ENCODE measurements at regions of chr22 and their contacts with region 1.

Region 1: DNA sequence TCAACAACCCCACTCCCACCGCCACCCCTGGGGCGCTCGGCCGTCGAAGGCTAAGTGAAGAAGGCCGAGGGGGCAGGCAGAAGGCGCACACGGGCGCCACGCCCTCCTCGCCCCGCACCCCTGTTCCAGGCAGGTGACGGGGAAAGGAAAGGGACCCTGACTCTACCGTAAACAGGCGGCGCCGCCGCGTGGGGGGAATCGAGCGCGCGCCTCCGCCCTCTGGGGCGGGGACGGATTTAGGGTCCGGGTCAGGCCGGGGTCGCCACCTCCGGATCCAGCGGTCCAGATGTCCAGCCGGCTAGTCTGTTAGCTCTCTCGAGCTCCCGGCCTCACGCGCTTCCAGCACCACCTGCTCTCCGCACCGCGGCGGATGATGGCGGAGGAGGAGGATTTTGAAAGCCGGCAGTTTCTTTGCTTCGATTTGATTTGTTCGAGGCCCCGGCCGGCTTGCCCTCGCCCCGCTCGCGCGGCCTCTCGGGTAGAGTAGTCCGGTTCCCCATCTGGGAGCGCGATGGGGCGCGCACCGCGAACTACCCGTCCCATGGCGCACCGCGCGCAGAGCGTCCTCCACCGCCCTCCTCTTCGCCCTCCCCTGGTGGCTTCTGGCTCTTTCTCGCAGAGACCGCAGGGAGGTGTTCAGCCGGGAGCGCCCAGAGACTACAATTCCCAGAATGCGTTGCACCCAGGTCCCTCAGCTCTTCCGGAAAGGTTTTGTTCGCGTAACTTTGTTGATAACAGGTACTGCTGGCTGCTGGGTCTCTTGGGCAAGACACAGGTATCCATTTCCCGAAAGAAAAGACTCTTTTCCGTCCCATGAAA is at the start of gene RANGAP1:
- DNase-seq: peak; percentile 95 to 99 (median 99)
- ATAC-seq: peak; percentile 96
- H3K4me3 ChIP-seq: peak within 1 kb of the TSS; percentile 93
- H3K4me3 Mint-ChIP-seq: peak within 1 kb of the TSS; percentile 90 to 99 (median 96)
- H3K27ac ChIP-seq: peak within 1 kb of the TSS; percentile 99
- H3K27ac Mint-ChIP-seq: peak within 1 kb of the TSS; percentile 95 to 99 (median 98)
- H3K4me1 ChIP-seq: peaks cover 10 to 15% of the 10 kb centered on the region in 2 donors
- H3K4me1 Mint-ChIP-seq: peaks cover 21 to 46% (median 42%) of the 10 kb centered on the region in 7 donors
- H3K27me3 ChIP-seq: no peaks in the 10 kb centered on the region
- H3K27me3 Mint-ChIP-seq: no peaks in the 10 kb centered on the region
- total RNA-seq, gene RANGAP1: 60.7 to 122 (median 72.4) TPM

Region 2: DNA sequence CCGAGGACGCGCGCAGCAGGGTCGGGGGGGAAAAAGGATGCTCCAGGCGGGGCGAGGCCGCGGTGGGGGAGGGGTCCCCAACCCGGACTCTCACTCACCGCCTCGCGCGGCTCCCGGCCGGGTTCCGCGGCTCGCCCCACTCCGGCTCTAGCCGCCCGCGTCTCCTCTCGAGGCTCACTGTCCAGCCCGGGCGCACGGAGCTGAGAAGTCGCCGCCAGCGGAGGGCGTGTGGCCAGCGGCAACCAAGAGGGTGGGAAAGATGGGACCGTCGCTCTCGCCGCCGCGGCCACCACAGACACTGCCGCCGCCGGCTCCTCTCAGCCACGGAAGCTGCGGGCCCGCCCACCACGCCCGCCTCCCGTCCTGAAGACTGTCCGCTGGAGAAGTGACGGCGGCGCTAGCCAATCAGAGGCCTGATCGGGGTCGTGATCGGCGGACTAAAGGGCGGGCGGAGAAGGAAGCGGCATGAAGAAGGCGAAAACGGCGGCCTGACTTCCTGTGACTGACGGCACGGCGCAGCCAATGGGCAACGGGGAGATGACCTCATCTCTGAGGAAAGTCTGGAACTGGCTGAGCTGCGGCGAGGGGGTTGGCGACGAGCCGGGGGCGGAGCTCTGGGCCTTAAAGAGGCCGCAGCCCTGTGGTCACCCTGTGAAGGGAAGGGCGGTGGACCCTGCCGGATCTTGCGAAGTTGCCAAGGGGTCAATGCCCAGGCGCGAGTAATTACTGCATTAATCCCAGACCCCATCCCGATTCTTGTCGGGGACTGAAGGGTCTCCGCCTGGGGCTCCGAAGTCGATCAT is 649.4 kb before region 1 on chr22 and contains the start of gene MRTFA:
- CTCF ChIA-PET with region 1: no interaction called
- POLR2A ChIA-PET with region 1: interaction called, 3 read pairs
- intact Hi-C with region 1: loop called in 1 of 2 experiments (anchors 2 kb)
- DNase-seq: peak; percentile 90 to 99 (median 98)
- ATAC-seq: peak; percentile 96
- H3K4me3 ChIP-seq: peak within 1 kb of the TSS; percentile 84
- H3K4me3 Mint-ChIP-seq: peak within 1 kb of the TSS; percentile 94 to 100 (median 97)
- H3K27ac ChIP-seq: peak within 1 kb of the TSS; percentile 85
- H3K27ac Mint-ChIP-seq: peak within 1 kb of the TSS; percentile 96 to 99 (median 97)
- H3K4me1 ChIP-seq: peaks cover 14 to 27% of the 10 kb centered on the region in 2 donors
- H3K4me1 Mint-ChIP-seq: peaks cover 27 to 56% (median 44%) of the 10 kb centered on the region in 7 donors
- H3K27me3 ChIP-seq: no peaks in the 10 kb centered on the region
- H3K27me3 Mint-ChIP-seq: no peaks in the 10 kb centered on the region
- total RNA-seq, gene MRTFA: 64.0 to 114 (median 104) TPM

Region 3: GRCh38 chr22:40950962-40951794 is 334.9 kb before region 1 on chr22 and contains the start of gene RBX1:
- CTCF ChIA-PET with region 1: no interaction called
- POLR2A ChIA-PET with region 1: interaction called, 12 read pairs
- intact Hi-C with region 1: loop called (anchors 1 kb)
- DNase-seq: peak; percentile 96 to 100 (median 99)
- ATAC-seq: peak; percentile 92
- H3K4me3 ChIP-seq: peak within 1 kb of the TSS; percentile 98
- H3K4me3 Mint-ChIP-seq: peak within 1 kb of the TSS; percentile 91 to 99 (median 98)
- H3K27ac ChIP-seq: peak within 1 kb of the TSS; percentile 99
- H3K27ac Mint-ChIP-seq: peak within 1 kb of the TSS; percentile 96 to 100 (median 99)
- H3K4me1 ChIP-seq: peaks cover 16 to 19% of the 10 kb centered on the region in 2 donors
- H3K4me1 Mint-ChIP-seq: peaks cover 20 to 43% (median 39%) of the 10 kb centered on the region in 7 donors
- H3K27me3 ChIP-seq: no peaks in the 10 kb centered on the region
- H3K27me3 Mint-ChIP-seq: no peaks in the 10 kb centered on the region
- total RNA-seq, gene RBX1: 28.9 to 91.3 (median 32.7) TPM

Region 4: DNA sequence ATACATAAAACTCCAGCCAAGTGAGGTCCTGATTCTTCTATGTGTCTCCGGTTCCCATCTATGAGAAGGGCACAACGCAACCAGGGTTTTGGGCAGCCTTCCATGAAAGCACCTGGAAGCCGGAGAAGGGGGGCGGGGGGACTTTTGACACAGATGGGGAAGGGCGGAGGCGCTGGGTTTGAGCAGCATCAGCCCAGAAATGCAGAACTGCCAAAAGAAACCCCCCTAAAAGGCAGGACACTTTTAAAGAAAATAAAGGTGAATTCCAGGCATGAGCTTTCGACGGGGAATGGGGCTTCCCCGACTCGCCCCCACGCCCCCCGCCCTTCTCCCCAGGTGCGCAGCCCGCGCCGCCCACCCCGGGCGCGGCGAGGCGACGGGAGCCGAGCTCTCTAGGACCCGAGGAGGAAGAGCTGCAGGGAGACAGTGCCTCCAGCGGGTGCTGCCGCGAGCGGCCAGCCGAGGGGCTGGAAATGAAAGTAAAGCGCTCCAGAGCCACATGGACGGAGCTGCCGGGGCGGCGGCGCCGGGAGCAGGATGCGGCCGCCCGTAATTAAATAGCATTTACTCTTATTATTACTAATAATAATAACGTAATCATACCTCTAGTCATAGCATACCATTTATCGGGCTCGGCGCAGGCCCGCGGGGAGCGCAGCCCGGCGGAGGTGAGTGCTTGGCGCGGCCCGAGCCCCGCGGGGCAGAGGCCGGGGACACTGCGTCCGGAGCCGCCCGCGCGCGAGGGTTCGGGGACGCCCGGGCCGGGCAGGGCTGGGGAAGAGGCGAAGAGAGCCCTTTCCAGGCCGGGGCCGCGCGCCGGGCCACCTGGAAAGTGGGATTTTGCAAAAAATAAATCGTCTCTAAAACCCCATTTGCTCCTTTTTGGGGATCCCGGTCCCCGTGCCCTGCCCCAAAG is 15.3 kb after region 1 on chr22 and contains the start of gene ZC3H7B:
- CTCF ChIA-PET with region 1: interaction called, 7 read pairs
- POLR2A ChIA-PET with region 1: interaction called, 60 read pairs
- intact Hi-C with region 1: loop called (anchors 1 kb)
- DNase-seq: peak; percentile 73 to 89 (median 83)
- ATAC-seq: peak; percentile 98
- H3K4me3 ChIP-seq: peak within 1 kb of the TSS; percentile 22
- H3K4me3 Mint-ChIP-seq: peak within 1 kb of the TSS; percentile 67 to 91 (median 85)
- H3K27ac ChIP-seq: peak within 1 kb of the TSS; percentile 82
- H3K27ac Mint-ChIP-seq: peak within 1 kb of the TSS; percentile 72 to 96 (median 87)
- H3K4me1 ChIP-seq: peaks cover 13 to 15% of the 10 kb centered on the region in 2 donors
- H3K4me1 Mint-ChIP-seq: peaks cover 19 to 35% (median 32%) of the 10 kb centered on the region in 7 donors
- H3K27me3 ChIP-seq: no peaks in the 10 kb centered on the region
- H3K27me3 Mint-ChIP-seq: no peaks in the 10 kb centered on the region
- total RNA-seq, gene ZC3H7B: 36.9 to 65.9 (median 42.7) TPM

Region 5: DNA sequence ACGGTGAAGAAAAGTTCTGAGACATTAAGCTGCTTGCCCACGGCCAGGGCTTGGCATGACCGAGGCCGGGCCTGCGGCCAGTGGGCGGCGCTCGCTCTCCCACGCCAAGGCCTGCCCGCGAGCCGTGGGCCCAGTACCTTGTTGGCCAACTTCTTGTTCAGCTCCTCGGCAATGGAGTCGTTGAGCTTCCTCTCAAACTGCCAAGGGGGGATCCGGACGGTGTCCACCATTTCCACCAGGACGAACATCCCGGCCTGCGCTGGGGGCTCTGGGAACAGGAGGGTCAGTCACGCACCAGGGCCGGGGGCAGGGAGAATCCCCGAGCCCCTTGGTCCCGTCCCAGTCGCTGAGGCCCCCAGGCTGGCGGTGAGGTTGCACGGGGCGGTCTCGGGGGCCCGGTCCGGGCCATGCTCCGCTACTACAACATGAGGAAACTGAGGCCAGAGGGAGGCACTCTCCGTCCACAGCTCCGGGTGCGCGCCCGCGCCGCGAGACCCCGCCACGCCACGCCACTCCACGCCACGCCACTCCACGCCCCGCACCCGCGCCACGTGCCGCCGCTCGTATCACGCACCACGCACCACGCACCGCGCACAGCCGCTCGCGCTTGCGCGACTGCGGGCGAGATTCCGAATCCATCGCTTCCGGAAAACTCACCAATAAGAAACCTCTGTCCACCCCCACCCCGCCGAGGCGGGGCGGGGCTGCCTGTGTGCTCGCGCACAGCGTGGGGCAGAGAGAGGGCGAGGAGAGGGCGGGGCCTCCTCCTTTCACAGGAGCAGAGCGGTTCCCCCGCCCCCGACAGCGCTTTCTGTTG is 258.0 kb after region 1 on chr22 and contains the start of gene POLR3H:
- CTCF ChIA-PET with region 1: no interaction called
- POLR2A ChIA-PET with region 1: no interaction called
- intact Hi-C with region 1: loop called (anchors 1 kb)
- DNase-seq: peak; percentile 89 to 97 (median 95)
- ATAC-seq: peak; percentile 100
- H3K4me3 ChIP-seq: peak within 1 kb of the TSS; percentile 96
- H3K4me3 Mint-ChIP-seq: peak within 1 kb of the TSS; percentile 82 to 100 (median 97)
- H3K27ac ChIP-seq: peak within 1 kb of the TSS; percentile 84
- H3K27ac Mint-ChIP-seq: peak within 1 kb of the TSS; percentile 88 to 98 (median 95)
- H3K4me1 ChIP-seq: peaks cover 7 to 15% of the 10 kb centered on the region in 2 donors
- H3K4me1 Mint-ChIP-seq: peaks cover 30 to 52% (median 45%) of the 10 kb centered on the region in 7 donors
- H3K27me3 ChIP-seq: no peaks in the 10 kb centered on the region
- H3K27me3 Mint-ChIP-seq: no peaks in the 10 kb centered on the region
- total RNA-seq, gene POLR3H: 21.7 to 59.6 (median 28.5) TPM

Region 6: GRCh38 chr22:41780746-41781505 is 494.9 kb after region 1 on chr22:
- CTCF ChIA-PET with region 1: no interaction called
- POLR2A ChIA-PET with region 1: no interaction called
- intact Hi-C with region 1: loop called in 1 of 2 experiments (anchors 5 kb)
- DNase-seq: peak; percentile 64 to 99 (median 96)
- ATAC-seq: peak; percentile 97
- H3K4me3 ChIP-seq: peak overlapping the region; percentile 67
- H3K4me3 Mint-ChIP-seq: peak overlapping the region; percentile 77 to 93 (median 89)
- H3K27ac ChIP-seq: peak overlapping the region; percentile 88
- H3K27ac Mint-ChIP-seq: peak overlapping the region; percentile 98 to 100 (median 100)
- H3K4me1 ChIP-seq: peaks cover 19 to 25% of the 10 kb centered on the region in 2 donors
- H3K4me1 Mint-ChIP-seq: peaks cover 32 to 71% (median 51%) of the 10 kb centered on the region in 7 donors
- H3K27me3 ChIP-seq: no peaks in the 10 kb centered on the region
- H3K27me3 Mint-ChIP-seq: no peaks in the 10 kb centered on the region